Psoas muscle (tissue), 8 donors: ENCODE measurements at regions of chr2 and their contacts with region 1.

Region 1: DNA sequence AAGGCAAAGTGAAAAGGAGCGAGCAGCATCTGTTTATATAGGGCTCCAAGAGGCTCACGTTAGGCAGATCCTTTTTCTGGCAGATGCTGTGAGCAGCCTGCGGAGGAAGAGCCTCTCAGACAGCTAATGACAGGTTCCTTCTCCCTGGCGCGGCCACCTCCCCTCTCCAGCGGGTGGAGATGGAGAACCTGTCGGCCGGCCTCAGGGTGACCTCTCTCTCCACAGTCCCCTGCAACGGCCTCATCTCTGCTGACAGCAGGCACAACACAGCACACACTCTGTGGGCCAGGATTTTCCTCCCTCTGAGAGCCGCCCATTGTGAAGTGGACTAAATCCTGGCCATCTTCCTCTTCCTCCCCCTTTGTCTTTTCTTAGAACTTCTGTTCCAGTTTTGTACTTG is 119.8 kb downstream of the PRKCE start:
- DNase-seq: peak; percentile 39 to 62
- ATAC-seq: peak; percentile 38 to 70 (median 47)
- H3K4me3 ChIP-seq: no peak overlapping the region
- H3K27ac ChIP-seq: no peak overlapping the region
- H3K4me1 ChIP-seq: peaks cover 16% of the 10 kb centered on the region
- H3K27me3 ChIP-seq: no peaks in the 10 kb centered on the region
- CTCF ChIP-seq: no peak

Region 2: DNA sequence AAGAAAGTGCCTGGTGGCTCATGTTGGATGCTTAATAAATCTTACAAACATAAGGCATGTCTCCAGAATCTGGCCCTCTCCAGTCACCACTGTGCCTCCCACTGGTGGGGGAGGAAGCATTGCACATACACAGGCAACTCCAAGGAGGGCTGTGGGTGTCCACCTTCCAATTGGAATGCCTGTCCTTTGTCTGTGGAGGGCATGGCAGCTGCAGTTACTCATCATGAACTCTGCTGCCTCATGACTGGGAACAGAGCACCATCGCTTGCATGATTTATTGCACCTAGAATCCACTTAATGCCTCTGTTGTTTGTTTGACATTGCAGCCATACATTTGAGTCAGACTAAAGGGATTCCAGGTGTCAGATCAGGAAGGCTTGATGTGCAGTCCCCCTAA is 159.1 kb after region 1 on chr2:
- intact Hi-C with region 1: loop called in 1 of 2 experiments (anchors 5 kb)
- DNase-seq: no peak
- ATAC-seq: peak; percentile 66 to 91 (median 85)
- H3K4me3 ChIP-seq: no peak overlapping the region
- H3K27ac ChIP-seq: peak overlapping the region; percentile 51
- H3K4me1 ChIP-seq: peaks cover 13% of the 10 kb centered on the region
- H3K27me3 ChIP-seq: no peaks in the 10 kb centered on the region
- CTCF ChIP-seq: no peak

Region 3: DNA sequence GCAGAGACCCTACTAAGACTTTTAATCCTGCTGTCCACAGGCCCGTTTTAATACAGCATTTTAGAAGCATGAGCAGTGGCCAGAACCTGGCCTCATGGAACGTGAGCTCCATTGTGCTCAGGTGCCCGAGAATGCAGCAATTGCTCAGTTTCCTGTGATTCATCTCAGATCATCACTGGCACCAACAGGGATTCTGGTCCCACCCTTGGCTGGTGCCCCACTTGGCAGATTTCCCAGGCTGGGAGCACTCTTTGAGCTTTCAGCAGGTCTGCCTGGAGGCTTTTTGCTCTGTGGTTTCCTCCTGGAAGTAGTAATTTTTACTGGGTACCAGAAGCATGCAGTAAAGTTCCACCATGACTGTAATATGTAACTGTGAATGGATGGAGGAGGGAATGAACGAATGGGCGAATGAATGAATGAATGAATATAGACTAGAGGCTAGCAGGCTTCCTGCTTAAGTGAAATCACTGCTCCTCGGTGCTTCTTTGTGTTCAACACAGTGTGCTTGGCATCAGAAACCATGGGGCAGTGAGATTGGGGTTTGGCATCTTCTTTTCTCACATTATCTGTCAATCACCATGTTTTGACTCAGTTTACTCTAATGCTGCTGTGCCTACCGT is 193.1 kb after region 1 on chr2:
- intact Hi-C with region 1: no loop called
- DNase-seq: peak; percentile 77 to 78
- ATAC-seq: peak; percentile 34 to 60 (median 58)
- H3K4me3 ChIP-seq: no peak overlapping the region
- H3K27ac ChIP-seq: peak overlapping the region; percentile 6
- H3K4me1 ChIP-seq: peaks cover 10% of the 10 kb centered on the region
- H3K27me3 ChIP-seq: no peaks in the 10 kb centered on the region
- CTCF ChIP-seq: no peak